ENCODE measurements at regions of chr6 and their contacts with region 1.

Region 1: GRCh38 chr6:21593412-21593926 is at the start of gene SOX4:
- DNase-seq: peak; percentile 77
- H3K4me3 Mint-ChIP-seq: no peak within 1 kb of the TSS
- H3K27ac Mint-ChIP-seq: peak within 1 kb of the TSS; percentile 91
- H3K4me1 Mint-ChIP-seq: peaks cover 22% of the 10 kb centered on the region
- H3K27me3 Mint-ChIP-seq: peaks cover 47% of the 10 kb centered on the region
- total RNA-seq, gene SOX4: 20.3 and 20.8 TPM in 2 replicates

Region 2: GRCh38 chr6:20401205-20402091 is 1192.0 kb before region 1 on chr6 and contains the start of gene E2F3:
- intact Hi-C with region 1: loop called (anchors 5 kb)
- DNase-seq: peak; percentile 99
- H3K4me3 Mint-ChIP-seq: peak within 1 kb of the TSS; percentile 97
- H3K27ac Mint-ChIP-seq: peak within 1 kb of the TSS; percentile 99
- H3K4me1 Mint-ChIP-seq: peaks cover 32% of the 10 kb centered on the region
- H3K27me3 Mint-ChIP-seq: no peaks in the 10 kb centered on the region
- total RNA-seq, gene E2F3: 27.9 TPM in 2 replicates

Region 3: DNA sequence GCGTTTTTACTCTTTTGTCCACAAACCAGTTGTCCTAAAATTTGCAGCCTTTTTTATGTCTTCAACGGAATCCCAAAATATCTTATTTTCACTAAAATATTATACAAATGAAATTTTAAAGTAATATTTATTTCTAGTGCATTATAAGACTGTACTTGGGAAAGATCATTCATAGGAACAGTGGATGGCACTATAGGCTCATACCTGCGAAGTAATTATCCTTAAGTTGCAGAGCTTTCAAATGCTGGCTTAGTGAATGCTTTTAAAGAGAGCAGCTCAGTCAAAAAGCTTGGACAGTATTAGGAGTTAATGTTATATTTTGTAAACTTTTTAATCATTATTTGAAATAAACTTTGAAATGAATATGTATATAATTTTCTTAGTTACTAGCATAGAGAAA is 804.3 kb before region 1 on chr6:
- intact Hi-C with region 1: loop called (anchors 2 kb)
- DNase-seq: no peak
- H3K4me3 Mint-ChIP-seq: no peak overlapping the region
- H3K27ac Mint-ChIP-seq: no peak overlapping the region
- H3K4me1 Mint-ChIP-seq: peaks cover 1% of the 10 kb centered on the region
- H3K27me3 Mint-ChIP-seq: no peaks in the 10 kb centered on the region

Region 4: DNA sequence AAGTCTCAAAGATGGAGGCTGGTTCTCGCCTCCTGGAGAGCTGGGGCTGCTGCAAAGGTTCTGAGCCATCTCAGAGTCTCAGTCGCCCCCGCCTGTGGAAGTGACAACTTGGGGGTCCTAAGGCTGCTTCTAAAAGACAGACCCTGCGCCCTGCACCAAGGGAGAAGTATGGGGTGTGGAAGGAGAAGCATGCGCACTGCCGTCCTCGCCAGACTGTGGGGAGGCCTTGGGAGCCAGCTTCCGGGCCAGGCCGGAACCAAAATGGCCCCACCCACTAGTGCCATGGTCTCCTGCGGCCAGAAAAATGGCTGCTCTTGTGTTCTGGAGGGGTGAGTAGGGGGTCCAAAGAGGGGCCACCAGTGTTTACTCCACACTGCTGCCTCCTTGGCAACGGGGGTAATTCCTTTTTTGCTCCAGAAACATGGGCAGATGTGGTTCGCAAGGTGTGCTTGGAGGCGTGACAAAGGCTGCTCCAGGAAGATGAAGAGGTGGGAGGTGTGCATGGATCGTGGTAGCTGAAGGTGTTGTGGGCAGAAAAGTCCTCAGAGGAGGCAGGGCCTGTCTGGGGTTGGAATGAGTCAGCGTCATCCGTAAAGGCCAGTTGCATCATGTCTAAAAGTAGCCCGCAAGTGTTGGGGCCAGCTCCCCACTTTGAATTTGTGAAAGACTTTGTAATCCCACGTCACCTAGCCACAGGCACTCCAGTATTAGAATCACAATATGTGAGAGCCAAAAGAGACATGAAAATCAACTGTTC is 329.8 kb before region 1 on chr6:
- intact Hi-C with region 1: loop called (anchors 2 kb)
- DNase-seq: no peak
- H3K4me3 Mint-ChIP-seq: no peak overlapping the region
- H3K27ac Mint-ChIP-seq: no peak overlapping the region
- H3K4me1 Mint-ChIP-seq: peaks cover 26% of the 10 kb centered on the region
- H3K27me3 Mint-ChIP-seq: no peaks in the 10 kb centered on the region

Region 5: GRCh38 chr6:21836772-21837425 is 243.4 kb after region 1 on chr6:
- intact Hi-C with region 1: loop called (anchors 5 kb)
- DNase-seq: no peak
- H3K4me3 Mint-ChIP-seq: no peak overlapping the region
- H3K27ac Mint-ChIP-seq: no peak overlapping the region
- H3K4me1 Mint-ChIP-seq: peaks cover 32% of the 10 kb centered on the region
- H3K27me3 Mint-ChIP-seq: no peaks in the 10 kb centered on the region

Region 6: DNA sequence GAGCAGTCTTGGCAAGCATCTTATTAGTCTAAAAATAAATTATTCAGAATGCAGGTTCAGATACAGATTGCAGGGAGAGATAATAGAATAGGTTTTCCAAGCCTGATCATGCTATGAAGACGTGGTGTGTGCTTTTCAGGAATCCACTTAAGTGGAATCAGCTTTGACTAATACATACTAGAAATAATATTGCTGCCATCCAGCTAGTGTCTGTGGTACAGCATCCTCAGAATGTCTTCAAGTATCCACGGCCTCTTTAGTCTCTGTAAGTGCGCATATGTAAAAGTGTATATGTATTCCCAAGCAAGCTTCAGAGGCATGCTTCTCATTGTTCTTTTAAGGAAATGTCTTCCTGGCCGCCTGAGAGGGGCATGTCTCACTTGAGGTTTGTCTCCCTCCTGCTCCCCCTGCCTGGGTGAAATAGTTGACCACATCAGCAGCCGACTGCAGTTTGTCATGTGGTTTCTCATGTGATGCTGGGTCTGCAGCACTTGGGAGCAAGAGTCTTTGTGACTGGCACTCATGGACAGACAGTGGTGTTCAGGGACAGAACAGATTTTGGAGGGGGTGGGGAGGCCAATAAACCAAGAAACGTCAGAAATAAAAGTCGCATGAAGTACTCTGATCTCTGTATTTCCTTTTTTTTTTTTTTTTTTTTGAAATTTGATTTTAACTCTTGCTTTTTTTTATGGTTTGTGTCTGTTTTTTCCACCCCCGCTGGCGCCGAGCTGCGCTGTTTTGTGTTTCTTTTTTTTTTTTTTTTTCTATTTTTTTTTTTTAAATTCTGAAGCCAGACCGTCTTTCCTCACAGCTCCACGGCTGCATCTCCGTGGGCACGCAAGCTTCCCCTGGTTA is 552.6 kb after region 1 on chr6:
- intact Hi-C with region 1: loop called (anchors 5 kb)
- DNase-seq: no peak
- H3K4me3 Mint-ChIP-seq: peak overlapping the region; percentile 75
- H3K27ac Mint-ChIP-seq: peak overlapping the region; percentile 44
- H3K4me1 Mint-ChIP-seq: peaks cover 37% of the 10 kb centered on the region
- H3K27me3 Mint-ChIP-seq: peaks cover 40% of the 10 kb centered on the region